ENCODE measurements at regions of chr1 and their contacts with region 1.

Region 1: GRCh38 chr1:150186789-150187559 is 37.3 kb downstream of the PLEKHO1 start:
- DNase-seq: peak; percentile 40
- H3K4me3 ChIP-seq: no peak overlapping the region
- H3K27ac ChIP-seq: no peak overlapping the region
- H3K4me1 ChIP-seq: no peaks in the 10 kb centered on the region
- H3K27me3 ChIP-seq: peaks cover 0 to 3% of the 10 kb centered on the region in 2 experiments
- CTCF ChIP-seq: peak; percentile 13 to 21
- POLR2A ChIP-seq: no peak

Region 2: DNA sequence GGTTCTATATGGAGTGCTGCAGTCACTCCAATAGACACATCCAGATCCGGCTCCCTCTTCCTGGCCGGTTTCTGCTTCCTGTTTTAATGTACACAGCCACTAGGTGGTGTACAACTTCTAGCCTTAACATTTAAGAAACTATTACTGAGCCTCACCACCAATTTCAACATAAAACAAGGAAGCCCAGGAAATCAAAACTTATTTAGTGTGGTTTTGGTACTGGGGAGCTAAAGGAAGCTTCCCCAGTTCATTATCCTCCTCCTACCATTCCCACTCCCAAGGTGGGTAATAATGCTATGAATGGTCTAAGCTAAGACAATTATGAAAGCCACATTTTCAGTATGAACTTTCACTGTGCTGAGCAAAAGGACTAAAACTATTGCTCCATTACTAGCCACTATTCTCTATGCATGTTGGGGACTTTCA is 224.8 kb before region 1 on chr1:
- CTCF ChIA-PET with region 1: interaction called, 44 read pairs
- POLR2A ChIA-PET with region 1: no interaction called
- dilution Hi-C with region 1: no loop called
- intact Hi-C with region 1: loop called (anchors 1 kb)
- DNase-seq: peak; percentile 81
- H3K4me3 ChIP-seq: no peak overlapping the region
- H3K27ac ChIP-seq: no peak overlapping the region
- H3K4me1 ChIP-seq: no peaks in the 10 kb centered on the region
- H3K27me3 ChIP-seq: no peaks in the 10 kb centered on the region
- CTCF ChIP-seq: peak; percentile 48 to 53
- POLR2A ChIP-seq: no peak

Region 3: DNA sequence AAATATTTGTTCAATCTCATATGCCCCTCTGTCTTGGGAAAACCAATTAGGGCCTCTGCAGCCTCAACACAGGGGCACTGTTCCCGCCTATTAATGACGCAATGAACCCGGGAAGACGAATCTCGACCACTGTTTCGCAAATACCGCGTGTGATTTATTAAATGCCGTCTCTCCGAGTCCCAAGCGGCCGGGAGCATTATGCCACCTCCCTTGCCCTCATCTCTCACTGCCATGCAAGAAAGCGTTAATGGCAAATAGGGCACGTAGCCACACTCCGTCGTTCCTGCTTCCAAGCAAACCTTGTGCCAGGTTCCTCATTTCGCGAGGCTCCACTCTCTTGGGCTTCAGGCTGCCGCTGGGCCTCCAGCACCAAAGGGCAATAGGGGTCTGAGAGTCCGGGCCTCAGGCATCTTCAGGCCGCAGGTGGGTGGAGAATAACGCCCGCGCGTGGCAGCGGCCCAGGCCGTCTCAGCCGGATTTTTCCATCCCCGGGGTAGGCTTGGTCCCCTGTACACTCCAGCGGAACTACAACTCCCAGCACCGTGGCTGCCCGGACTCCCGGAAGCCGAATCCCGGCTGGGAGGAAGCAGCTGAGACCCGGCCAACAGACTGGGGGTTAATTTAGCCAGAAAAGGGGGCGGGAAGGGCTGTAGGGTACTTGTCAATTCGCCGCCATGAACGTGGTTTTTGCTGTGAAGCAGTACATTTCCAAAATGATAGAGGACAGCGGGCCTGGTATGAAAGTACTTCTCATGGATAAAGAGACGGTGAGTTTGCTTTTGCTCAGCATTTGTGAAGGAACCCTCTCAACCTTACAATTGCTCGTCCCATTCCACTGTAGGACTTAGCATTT is 119.6 kb before region 1 on chr1 and contains the start of gene VPS45:
- CTCF ChIA-PET with region 1: interaction called, 92 read pairs
- POLR2A ChIA-PET with region 1: no interaction called
- dilution Hi-C with region 1: no loop called
- intact Hi-C with region 1: no loop called
- DNase-seq: peak; percentile 93
- H3K4me3 ChIP-seq: peak within 1 kb of the TSS; percentile 45 to 85 (median 72)
- H3K27ac ChIP-seq: peak within 1 kb of the TSS; percentile 53
- H3K4me1 ChIP-seq: peaks cover 24% of the 10 kb centered on the region
- H3K27me3 ChIP-seq: no peaks in the 10 kb centered on the region
- CTCF ChIP-seq: peak; percentile 18 to 36
- POLR2A ChIP-seq: no peak
- total RNA-seq, gene VPS45: 40.4 and 43.7 TPM in 2 replicates

Region 4: DNA sequence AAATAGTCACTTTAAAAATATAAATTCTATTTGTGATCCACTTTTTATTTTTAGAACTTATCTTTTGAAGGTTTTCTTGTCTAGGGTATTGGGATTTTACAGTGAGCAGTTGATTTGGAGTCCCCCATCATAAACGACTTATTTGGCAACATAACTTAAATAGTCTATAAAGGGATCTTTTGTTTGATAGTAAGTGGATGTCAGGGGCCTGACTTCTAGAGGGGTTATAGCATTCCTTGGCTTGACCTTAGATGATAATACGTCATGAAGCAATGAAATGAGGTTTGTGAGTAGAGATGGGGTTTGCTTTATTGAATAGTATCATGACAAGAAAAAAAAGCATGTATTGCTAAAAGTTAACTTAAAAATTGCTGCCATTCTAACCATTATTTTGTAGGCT is 101.6 kb before region 1 on chr1:
- CTCF ChIA-PET with region 1: interaction called, 16 read pairs
- POLR2A ChIA-PET with region 1: no interaction called
- dilution Hi-C with region 1: no loop called
- intact Hi-C with region 1: no loop called
- DNase-seq: no peak
- H3K4me3 ChIP-seq: no peak overlapping the region
- H3K27ac ChIP-seq: no peak overlapping the region
- H3K4me1 ChIP-seq: no peaks in the 10 kb centered on the region
- H3K27me3 ChIP-seq: no peaks in the 10 kb centered on the region
- CTCF ChIP-seq: no peak
- POLR2A ChIP-seq: no peak

Region 5: DNA sequence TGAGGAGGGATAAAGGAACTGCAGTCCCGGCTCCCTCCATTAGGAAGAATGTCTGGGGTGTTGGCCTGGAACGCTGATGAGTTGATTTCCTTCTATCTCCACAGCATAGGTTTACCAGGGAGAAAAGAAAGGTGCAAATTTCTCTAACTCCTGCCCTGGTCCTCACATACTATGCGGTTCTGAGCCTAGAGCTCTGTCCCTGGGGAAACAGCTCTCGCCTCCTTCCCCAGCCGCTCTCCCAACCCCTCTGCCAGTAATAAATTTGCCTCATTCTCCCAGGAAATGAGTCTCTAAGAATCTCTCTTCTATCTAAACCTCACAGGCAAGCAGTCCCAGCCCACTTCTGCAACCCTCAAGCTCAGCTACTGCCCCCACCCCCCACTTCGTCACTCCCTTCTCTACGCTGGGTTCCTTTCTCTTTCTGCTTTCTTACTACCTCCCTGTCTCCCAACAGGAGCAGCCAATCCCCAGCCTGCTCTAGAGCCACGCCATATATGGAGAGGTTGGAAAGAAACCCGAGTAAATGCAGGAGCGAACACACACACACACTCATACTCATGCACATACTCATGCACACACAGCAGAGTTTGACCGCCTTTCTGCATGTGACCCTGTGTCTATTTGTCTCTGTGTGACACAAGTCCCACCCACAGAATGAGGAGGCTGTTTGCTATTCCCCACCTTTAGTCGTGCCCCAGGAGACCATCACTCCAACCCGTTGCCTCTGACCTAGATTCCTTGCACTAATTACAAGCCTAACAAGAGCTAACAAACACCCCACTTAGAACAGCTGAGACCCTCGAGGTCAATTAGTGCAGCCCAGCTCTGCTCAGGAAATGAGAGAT is 23.9 kb before region 1 on chr1:
- CTCF ChIA-PET with region 1: interaction called, 66 read pairs
- POLR2A ChIA-PET with region 1: no interaction called
- dilution Hi-C with region 1: no loop called
- intact Hi-C with region 1: no loop called
- DNase-seq: peak; percentile 93
- H3K4me3 ChIP-seq: no peak overlapping the region
- H3K27ac ChIP-seq: peak overlapping the region; percentile 75
- H3K4me1 ChIP-seq: peaks cover 41% of the 10 kb centered on the region
- H3K27me3 ChIP-seq: no peaks in the 10 kb centered on the region
- CTCF ChIP-seq: no peak
- POLR2A ChIP-seq: peak; percentile 25

Region 6: GRCh38 chr1:150176593-150176992 is 10.4 kb before region 1 on chr1:
- CTCF ChIA-PET with region 1: interaction called, 66 read pairs
- POLR2A ChIA-PET with region 1: no interaction called
- dilution Hi-C with region 1: no loop called
- intact Hi-C with region 1: no loop called
- DNase-seq: no peak
- H3K4me3 ChIP-seq: no peak overlapping the region
- H3K27ac ChIP-seq: no peak overlapping the region
- H3K4me1 ChIP-seq: no peaks in the 10 kb centered on the region
- H3K27me3 ChIP-seq: no peaks in the 10 kb centered on the region
- CTCF ChIP-seq: no peak
- POLR2A ChIP-seq: no peak

Region 7: DNA sequence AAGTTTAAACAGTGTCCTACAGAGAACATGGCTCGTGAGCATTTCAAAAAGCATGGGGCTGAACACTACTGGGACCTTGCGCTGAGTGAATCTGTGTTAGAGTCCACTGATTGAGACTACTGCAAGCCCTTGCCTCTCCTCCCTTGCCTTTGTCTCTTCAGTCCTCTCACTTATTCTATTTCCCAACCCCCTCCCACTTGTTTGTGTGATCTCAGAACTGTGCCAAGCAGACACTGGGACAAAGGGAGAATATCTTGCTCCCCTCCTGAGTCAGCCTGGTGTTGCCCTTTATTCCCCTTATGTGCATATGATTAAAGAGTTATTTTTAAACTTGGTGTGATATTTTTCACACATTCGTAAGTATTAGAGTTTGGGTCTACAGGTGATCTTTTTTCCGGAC is 165.9 kb after region 1 on chr1:
- CTCF ChIA-PET with region 1: no interaction called
- POLR2A ChIA-PET with region 1: no interaction called
- dilution Hi-C with region 1: no loop called
- intact Hi-C with region 1: no loop called
- DNase-seq: no peak
- H3K4me3 ChIP-seq: no peak overlapping the region
- H3K27ac ChIP-seq: no peak overlapping the region
- H3K4me1 ChIP-seq: no peaks in the 10 kb centered on the region
- H3K27me3 ChIP-seq: no peaks in the 10 kb centered on the region
- CTCF ChIP-seq: no peak
- POLR2A ChIP-seq: no peak